SK-N-SH (cell line): ENCODE measurements at regions of chr1 and their contacts with region 1.

Region 1: GRCh38 chr1:25819576-25820246 is at the start of gene MTFR1L:
- DNase-seq: peak; percentile 98
- H3K4me3 ChIP-seq: peak within 1 kb of the TSS; percentile 95 to 97
- H3K27ac ChIP-seq: peak within 1 kb of the TSS; percentile 79 to 88
- H3K4me1 ChIP-seq: peaks cover 8 to 29% of the 10 kb centered on the region in 2 experiments; a peak in 1 of 4 replicates
- H3K27me3 ChIP-seq: no peaks in the 10 kb centered on the region
- CTCF ChIP-seq: no peak
- EP300 ChIP-seq: no peak
- RAD21 ChIP-seq: no peak
- polyA plus RNA-seq, gene MTFR1L: 53.6 and 61.2 TPM in 2 replicates

Region 2: DNA sequence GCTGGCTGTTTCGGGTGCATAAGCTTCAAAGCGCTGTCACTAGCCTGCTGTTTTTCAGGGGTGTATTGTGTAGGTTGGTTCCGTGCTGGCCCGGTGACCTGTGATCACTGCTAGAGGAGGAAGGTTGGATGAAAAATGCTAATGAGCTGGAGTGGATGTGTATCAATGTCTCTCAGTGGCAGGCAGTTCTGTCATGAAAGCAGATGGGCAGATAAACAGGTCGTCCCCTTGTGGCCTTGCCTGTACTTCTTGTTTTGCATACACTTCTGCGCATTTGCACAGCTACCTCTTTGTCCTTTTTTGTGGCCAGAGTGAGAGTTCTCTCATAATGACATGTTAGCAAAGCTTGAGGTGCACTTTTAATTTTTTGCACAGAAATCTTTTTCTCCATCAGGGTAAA is 16.8 kb before region 1 on chr1:
- CTCF ChIA-PET with region 1: interaction called, 15 read pairs
- POLR2A ChIA-PET with region 1: interaction called, 3 read pairs
- DNase-seq: peak; percentile 53
- H3K4me3 ChIP-seq: no peak overlapping the region
- H3K27ac ChIP-seq: no peak overlapping the region
- H3K4me1 ChIP-seq: peaks cover 0 to 40% of the 10 kb centered on the region in 2 experiments; a peak in 3 of 4 replicates
- H3K27me3 ChIP-seq: no peaks in the 10 kb centered on the region
- CTCF ChIP-seq: no peak
- EP300 ChIP-seq: no peak
- RAD21 ChIP-seq: peak; percentile 36; the same call in 1 of the 2 replicates